ENCODE measurements at regions of chr19 and their contacts with region 1.

Region 1: DNA sequence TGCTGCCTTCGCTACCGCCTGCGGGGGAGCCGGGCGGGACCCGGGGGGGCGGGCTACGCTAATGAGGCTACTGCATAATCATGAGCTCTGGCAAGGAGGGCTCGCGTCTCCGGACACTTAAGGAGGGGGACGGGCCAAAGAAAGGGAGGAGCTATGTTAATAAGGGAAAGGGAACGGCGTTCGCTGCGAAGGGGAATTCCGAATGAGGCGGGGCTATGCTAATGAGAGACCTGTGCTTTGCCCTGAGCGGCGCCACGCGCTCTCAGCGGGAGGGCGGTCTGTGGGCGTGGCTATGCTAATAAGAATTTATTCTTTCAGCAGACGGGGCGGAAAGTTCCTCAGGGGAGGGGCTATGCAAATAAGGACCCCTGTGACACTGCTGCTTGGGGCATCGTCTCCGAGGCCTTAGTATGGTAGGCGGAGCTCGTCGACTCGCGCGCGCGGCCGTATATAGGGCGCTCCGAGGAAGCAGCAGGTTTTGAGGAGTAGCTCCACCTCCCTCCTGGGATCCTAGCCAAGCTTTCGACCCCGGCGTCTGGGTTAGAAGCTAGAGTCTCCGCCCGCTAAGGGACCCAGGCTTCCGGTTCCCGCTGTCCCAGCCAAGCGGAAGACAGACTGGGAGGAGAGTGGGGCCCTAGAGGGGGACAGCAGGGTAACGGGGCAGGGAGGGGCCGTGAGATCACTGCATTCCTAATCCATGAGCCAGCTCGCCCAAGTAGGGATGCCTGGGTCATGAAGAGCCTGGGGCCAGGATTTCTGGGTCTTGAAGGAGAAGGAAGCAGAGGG is at the start of gene RRAS:
- DNase-seq: peak; percentile 100
- H3K4me3 Mint-ChIP-seq: peak within 1 kb of the TSS; percentile 94
- H3K27ac Mint-ChIP-seq: peak within 1 kb of the TSS; percentile 99
- H3K4me1 Mint-ChIP-seq: peaks cover 55% of the 10 kb centered on the region
- H3K27me3 Mint-ChIP-seq: no peaks in the 10 kb centered on the region
- total RNA-seq, gene RRAS: 4.4 and 4.7 TPM in 2 replicates

Region 2: DNA sequence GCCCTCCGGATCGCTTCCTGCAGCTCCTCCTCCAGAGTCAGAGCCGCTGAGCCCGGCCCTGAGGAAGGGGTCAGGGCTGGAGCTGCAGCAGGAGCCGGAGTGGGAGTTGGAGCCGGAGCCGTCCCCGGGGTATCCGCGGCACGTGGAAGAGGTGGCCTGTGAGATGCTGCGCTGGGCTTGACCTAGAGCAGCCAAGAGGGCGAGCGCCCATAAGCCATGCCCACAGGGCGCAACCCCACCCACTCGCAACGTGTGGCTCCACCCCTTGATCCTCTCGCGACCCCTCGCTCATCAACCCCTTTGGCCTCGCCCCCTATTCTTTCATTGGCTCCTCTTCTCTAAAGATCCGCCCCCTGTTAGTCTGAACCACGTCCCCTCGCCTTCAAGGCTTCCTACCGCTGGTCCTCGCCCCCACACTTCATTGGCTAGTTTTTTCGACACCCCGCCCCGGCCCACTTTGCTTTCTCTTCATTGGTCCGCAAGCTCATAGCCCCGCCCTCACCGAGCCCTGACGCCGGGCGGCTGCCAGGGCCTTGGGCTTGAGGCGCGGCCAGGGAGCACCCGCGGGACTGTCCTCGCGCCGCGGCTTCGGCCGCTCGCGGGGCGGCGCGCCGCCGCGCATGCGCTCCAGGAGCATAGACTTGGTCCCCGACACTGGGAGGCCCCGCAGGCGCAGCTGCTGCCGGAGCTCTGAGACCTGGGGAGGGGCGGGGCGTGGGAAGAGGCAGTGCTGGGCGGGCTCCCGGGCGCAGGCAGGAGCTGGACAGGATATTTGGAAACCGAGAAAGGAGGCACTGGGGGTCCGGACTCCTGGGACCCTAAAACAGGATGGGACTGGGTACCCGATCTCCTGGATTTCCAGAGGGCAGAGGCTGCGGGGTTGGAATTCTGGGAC is 926.2 kb before region 1 on chr19:
- intact Hi-C with region 1: loop called (anchors 10 kb)
- DNase-seq: peak; percentile 98
- H3K4me3 Mint-ChIP-seq: peak overlapping the region; percentile 80
- H3K27ac Mint-ChIP-seq: peak overlapping the region; percentile 83
- H3K4me1 Mint-ChIP-seq: peaks cover 8% of the 10 kb centered on the region
- H3K27me3 Mint-ChIP-seq: peaks cover 1% of the 10 kb centered on the region

Region 3: DNA sequence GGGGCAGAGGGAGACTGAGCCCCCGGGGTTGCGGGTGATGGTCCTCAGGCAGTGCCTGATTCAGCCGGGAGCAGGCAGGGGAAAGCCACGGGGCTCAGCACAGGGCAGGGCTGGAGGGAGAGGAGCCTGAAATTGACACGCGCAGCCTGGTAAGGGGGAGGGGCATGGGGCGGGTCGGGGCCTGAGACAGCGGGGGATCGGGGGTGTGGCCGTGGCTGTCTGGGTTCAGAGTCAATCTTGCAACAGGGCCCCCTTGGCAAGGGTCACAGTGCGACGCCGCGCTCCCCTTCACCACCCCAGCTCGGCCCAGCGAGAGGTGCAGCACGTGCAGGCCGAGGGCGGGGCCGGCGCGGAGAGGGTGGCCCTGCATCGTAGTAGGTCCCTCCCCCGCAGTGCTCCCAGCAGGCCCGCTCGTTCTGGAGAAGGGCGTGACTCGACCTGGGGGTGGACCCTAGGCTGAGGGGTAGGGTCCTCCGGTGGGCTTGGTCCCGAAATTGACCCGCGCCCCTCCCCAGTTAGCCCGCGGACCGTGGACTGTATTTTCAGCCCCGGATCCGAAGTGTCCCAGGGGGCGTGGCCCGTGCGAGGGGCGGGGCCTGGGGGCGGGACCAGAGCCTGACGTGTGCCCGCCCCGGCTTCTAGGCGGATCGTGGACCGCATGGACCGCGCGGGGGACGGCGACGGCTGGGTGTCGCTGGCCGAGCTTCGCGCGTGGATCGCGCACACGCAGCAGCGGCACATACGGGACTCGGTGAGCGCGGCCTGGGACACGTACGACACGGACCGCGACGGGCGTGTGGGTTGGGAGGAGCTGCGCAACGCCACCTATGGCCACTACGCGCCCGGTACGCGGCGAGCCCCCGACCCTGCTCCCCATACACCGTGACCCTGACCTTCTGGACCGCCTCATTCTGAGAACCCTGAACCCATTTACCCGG is 106.5 kb before region 1 on chr19:
- intact Hi-C with region 1: loop called (anchors 1 kb)
- DNase-seq: peak; percentile 79
- H3K4me3 Mint-ChIP-seq: peak overlapping the region; percentile 86
- H3K27ac Mint-ChIP-seq: peak overlapping the region; percentile 85
- H3K4me1 Mint-ChIP-seq: peaks cover 21% of the 10 kb centered on the region
- H3K27me3 Mint-ChIP-seq: peaks cover 9% of the 10 kb centered on the region

Region 4: DNA sequence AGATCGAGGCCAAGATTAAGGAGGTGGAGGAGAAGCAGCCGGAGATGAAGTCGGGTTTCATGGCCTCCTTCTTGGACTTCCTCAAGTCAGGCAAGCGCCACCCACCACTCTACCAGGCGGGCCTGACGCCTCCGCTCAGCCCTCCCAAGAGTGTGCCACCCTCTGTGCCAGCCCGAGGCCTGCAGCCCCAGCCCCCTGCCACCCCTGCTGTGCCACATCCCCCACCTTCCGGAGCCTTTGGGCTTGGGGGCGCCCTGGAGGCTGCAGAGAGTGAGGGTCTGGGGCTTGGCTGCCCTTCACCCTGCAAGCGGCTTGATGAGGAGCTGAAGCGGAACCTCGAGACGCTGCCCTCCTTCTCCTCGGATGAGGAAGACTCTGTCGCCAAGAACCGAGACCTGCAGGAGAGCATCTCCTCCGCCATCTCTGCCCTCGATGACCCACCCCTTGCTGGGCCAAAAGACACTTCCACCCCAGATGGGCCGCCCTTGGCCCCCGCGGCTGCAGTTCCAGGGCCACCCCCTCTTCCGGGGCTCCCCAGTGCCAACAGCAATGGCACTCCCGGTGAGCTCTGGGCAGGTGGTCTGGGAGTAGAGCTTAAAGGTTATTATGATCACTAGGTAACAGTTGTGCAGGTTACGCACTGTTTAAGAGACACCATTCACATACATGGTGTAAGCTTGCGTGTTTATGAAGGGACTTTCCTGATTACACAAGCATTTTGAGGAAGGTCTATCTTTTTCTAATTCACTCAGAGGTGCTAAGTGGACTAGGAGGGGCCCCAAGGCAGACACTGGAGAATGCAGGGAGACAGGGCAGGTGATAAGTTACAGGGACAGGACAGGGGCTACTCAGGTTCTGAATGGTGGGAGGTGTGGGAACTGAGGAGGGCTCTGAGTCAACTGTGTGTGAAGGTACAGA is 40.7 kb before region 1 on chr19:
- intact Hi-C with region 1: no loop called
- DNase-seq: no peak
- H3K4me3 Mint-ChIP-seq: no peak overlapping the region
- H3K27ac Mint-ChIP-seq: no peak overlapping the region
- H3K4me1 Mint-ChIP-seq: no peaks in the 10 kb centered on the region
- H3K27me3 Mint-ChIP-seq: no peaks in the 10 kb centered on the region

Region 5: DNA sequence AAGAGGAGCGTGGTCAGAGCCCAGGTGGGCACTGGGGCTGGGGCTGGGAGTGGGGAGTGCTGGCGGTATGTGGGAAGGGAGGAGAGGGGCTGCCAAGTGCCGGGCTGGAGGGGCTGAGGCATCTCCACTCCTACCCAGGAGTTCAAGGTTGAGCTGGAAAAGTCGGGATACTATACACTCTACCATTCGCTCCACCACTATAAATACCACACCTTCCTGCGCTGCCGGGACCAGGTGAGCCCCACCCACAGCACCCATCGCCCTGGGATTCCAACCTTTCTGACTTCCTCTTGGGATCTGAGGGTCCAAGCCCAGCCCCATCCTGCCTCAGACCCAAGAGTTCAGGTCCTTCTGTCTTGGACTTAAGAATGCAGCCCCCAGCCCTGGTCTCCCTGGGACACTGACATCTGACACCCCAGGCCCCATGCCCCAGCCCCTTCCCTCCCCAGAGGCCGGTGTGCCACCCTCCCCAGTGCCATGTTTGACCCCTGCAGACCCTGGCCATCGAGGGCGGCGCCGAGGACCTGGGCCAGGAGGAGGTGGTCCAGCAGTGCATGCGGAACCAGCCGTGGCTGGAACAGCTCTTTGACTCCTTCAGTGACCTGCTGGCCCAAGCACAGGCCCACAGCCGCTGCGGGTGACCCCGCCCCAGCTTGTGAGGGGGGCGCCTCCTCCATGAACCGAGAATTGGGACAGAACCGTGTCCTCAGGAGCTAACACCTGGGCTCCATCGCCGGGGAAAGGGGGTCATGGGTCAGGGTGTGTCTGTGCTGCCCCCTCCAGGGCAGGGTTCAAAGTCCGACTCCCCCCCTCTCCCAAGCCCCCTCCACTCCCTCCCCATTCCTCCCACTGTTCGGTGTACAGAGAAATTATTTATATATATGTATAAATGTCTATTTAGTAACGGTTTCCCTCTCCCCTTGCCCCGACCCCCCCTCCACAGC is 15.1 kb before region 1 on chr19:
- intact Hi-C with region 1: no loop called
- DNase-seq: no peak
- H3K4me3 Mint-ChIP-seq: no peak overlapping the region
- H3K27ac Mint-ChIP-seq: no peak overlapping the region
- H3K4me1 Mint-ChIP-seq: no peaks in the 10 kb centered on the region
- H3K27me3 Mint-ChIP-seq: no peaks in the 10 kb centered on the region

Region 6: DNA sequence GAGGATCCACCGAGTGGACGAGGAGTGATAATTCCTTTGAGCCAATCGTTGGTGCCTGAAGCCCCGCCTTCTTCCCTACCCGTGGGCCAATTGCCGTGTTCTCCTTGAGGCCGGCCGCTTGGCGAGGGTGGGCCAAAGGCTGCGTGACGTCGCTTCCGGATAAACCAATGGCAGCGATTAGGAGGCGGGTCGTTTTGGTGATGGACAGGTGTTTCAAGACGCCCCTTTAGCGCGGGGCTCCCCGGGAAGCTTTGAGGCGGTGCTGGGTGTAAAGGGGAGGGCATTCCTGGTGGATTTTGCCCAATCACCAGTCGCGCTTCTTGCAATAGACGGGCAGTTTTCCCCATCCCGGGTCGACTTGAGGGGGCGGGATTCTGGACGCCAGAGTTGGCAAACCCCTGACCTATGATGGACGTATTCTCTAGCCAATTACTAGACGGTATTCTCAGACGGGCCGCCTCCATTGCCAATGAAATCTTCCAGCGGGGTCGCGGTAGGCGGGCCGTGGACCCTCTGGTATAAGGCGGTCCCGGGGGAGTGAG is 36.5 kb after region 1 on chr19:
- intact Hi-C with region 1: loop called (anchors 1 kb)
- DNase-seq: peak; percentile 98
- H3K4me3 Mint-ChIP-seq: peak overlapping the region; percentile 95
- H3K27ac Mint-ChIP-seq: peak overlapping the region; percentile 99
- H3K4me1 Mint-ChIP-seq: peaks cover 41% of the 10 kb centered on the region
- H3K27me3 Mint-ChIP-seq: no peaks in the 10 kb centered on the region

Region 7: GRCh38 chr19:49877020-49877878 is 236.9 kb after region 1 on chr19 and contains the starts of genes AKT1S1 and TBC1D17:
- intact Hi-C with region 1: loop called (anchors 1 kb)
- DNase-seq: peak; percentile 99
- H3K4me3 Mint-ChIP-seq: no peak within 1 kb of the TSS
- H3K27ac Mint-ChIP-seq: no peak within 1 kb of the TSS
- H3K4me1 Mint-ChIP-seq: peaks cover 30% of the 10 kb centered on the region
- H3K27me3 Mint-ChIP-seq: no peaks in the 10 kb centered on the region
- total RNA-seq, gene AKT1S1: 32.1 and 32.2 TPM in 2 replicates
- total RNA-seq, gene TBC1D17: 38.7 and 41.8 TPM in 2 replicates